Dorsolateral prefrontal cortex (tissue), 120 donors: ENCODE measurements at regions of chr14 and their contacts with region 1.

Region 1: DNA sequence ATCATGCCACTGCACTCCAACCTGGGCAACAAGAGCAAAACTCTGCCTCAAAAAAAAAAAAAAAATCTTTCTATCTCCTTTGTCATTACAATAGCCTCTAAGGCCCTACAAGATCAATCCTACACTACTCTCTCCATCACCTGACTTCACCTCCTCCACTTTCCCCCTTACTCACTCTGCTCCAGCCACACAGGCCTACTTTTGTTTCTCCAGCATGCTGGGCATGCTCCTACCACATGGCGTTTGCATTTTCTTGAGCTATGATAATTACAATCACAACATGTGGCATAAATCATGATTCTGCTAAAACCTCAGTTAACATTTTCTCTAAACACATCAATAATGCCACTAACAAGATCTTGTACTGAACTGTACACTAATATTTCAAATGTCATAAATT is 7.8 kb downstream of the PPP1R13B start:
- DNase-seq: no peak
- H3K4me3 ChIP-seq: no peak overlapping the region
- H3K27ac ChIP-seq: no peak overlapping the region
- H3K27me3 ChIP-seq: no peaks in the 10 kb centered on the region
- CTCF ChIP-seq: no peak

Region 2: DNA sequence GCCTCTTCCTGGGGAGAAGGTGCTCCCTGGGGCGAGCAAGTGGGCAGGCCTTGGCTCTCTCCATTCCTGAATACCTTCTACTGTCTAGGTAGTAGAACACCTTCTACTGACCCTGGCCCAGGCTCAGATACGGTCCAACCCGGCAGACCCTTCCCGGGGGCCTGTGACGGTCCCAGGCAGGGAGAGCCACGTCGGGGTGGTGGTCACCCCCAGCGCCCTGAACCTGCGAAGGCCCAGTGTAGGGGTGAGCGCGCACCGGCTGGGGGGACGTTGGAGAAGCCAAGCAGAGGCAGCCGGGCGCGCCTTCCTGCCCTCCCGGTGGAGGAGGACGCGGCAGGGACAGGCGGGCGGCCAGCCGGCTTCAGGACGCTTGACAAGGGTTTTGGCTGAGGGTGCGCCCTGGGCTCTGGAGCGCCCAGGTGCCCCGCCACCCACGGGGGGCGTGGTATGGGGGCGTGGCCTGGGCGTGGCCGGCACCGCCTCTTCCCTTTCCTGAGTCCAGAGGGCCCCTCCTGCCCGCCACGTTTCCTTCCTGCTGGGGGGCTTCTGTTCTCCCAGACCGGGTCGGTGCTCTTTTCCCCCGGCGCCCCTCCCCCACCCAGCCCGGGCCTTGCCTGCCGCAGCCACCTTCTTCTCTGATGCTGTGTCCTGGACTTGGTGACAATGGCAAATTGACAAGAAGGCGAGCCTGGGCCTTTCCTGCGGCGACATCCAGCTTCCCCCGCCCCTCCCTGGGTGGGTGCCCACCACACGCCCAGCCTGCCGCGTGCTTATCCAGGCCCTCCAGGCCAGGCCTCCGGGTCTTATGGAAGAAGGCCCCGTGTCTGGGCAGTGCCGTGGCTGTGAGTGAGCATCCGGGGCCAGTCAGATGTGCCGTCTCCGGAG is 32.3 kb after region 1 on chr14:
- intact Hi-C with region 1: loop called in 1 of 2 experiments (anchors 2 kb)
- DNase-seq: no peak
- H3K4me3 ChIP-seq: peak overlapping the region in 34 of 59 donors; percentile 0 to 42 (median 23)
- H3K27ac ChIP-seq: no peak overlapping the region
- H3K27me3 ChIP-seq: no peaks in the 10 kb centered on the region
- CTCF ChIP-seq: no peak